ENCODE measurements at regions of chr22 and their contacts with region 1.

Region 1: DNA sequence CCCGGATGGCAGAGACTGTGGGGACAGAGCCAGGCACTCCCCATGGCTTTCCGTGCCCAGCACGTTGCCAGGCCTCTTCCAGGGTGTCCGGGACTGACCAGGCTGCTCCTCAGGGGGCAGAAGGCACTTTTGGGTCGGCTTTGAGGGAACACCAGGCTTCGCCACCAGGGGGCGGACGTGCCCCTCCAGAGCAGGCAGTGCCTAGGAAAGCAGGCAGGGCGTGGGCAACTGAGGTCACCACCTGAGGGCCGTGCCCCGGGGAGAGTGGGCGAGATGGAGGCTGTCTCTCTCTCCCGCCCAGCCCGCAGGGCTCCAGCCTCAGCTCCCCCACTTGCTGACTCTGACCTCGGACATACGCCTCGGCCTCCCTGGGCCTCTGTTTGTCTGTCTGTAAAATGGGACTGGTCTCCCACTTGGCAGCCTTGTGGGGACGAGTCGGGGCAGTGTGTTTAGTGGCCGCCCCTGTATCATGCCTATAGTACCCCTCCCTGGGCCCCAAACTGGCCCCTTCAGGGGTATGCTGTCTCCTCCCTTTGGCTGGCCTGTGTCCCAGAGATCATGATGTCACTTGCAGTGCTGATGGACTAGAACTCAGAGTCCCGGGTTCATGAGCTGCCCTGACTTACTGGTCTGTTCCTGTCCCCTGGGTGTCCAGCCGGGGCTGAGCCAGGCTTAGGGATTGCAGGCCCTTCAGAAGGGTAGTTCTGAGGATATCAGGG is 4.4 kb upstream of the PRR5 start:
- DNase-seq: peak; percentile 89
- ATAC-seq: peak; percentile 61

Region 2: DNA sequence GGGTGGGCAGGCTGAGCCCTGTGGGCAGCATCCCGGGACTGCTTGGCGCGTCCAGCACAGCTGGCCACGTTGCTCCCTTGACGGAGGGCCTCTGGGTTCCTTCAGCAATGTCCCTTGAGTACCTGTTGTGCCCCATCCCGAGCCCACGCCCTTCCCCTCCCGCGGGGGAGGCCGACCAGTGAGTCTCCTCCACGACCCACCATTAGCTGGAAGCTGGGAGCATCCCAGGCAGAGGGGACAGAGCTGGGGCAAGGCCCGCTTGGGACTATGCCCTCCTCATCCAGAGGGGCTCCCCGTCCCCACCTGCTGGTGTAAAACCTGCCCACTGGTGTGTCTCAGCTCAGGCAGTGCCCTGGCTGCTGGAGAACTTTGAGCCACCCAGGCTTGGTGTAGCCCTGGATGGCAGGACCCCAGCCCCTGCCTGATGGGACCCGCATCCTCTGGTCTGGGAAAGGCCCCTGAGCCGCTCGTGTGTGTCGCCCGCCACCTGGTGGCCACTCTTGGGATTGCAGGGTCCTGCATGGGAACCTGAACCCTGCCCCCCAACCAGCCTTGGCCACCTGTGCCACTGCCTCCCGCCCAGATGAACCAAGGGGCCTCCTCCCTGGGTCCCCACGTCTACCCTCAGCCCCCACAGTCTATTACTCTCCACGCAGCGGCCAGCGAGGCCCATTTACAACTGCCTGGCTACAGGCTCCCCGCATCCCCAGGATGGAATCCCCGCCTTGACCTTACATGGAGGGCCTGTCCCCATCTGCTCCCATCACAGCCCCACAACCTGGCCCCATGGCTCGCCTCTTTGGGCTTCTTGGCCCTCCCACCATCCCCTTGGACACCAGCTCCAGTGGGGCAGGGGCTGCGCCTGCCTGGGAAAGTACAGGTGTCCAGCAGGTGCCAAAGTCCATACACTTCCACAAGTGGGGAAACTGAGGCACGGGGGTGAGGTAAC is 38.2 kb after region 1 on chr22:
- intact Hi-C with region 1: loop called (anchors 5 kb)
- DNase-seq: peak; percentile 87
- ATAC-seq: peak; percentile 77

Region 3: GRCh38 chr22:45424231-45424731 is 726.7 kb after region 1 on chr22:
- intact Hi-C with region 1: no loop called
- DNase-seq: peak; percentile 68
- ATAC-seq: peak; percentile 63